Right lobe of liver (tissue), 6 donors: ENCODE measurements at regions of chr10 and their contacts with region 1.

Region 1: DNA sequence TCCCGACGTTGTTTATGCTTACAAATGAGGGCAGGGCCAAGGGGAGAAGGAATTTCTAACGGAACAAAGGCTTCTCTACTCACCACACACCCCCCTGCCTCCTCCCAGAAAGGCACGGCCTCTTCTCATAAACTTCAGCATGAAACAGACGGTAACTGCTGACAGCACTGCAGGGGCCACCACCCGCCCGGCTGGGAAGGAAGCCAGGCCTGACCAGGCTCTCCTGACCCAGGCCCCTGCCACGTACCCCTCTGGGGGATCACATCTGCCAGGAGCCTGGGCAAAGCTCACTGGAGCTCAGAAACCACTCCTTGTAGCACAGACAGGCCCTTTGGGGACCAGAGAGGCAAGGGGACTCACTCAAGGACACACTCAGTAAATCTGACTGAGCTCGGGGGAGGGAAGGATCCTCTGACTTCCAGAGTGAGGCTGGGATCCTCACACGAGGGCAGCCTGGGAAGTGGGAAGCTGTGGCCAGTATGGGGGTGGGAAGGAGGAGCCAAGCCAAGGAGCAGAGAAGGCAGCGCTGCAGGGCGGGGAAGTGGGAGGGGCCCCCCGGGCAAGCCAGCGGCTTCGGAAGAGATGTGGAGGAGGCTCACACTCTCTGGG is 46.1 kb downstream of the ZCCHC24 start:
- DNase-seq: peak; percentile 76 to 82 (median 79)
- ATAC-seq: peak; percentile 54 to 70 (median 61)
- H3K4me3 ChIP-seq: no peak overlapping the region
- H3K27ac ChIP-seq: peak overlapping the region; percentile 58 to 74 (median 60)
- H3K4me1 ChIP-seq: peaks cover 2 to 81% (median 27%) of the 10 kb centered on the region in 4 donors
- H3K27me3 ChIP-seq: no peaks in the 10 kb centered on the region
- CTCF ChIP-seq: no peak
- POLR2A ChIP-seq: no peak

Region 2: DNA sequence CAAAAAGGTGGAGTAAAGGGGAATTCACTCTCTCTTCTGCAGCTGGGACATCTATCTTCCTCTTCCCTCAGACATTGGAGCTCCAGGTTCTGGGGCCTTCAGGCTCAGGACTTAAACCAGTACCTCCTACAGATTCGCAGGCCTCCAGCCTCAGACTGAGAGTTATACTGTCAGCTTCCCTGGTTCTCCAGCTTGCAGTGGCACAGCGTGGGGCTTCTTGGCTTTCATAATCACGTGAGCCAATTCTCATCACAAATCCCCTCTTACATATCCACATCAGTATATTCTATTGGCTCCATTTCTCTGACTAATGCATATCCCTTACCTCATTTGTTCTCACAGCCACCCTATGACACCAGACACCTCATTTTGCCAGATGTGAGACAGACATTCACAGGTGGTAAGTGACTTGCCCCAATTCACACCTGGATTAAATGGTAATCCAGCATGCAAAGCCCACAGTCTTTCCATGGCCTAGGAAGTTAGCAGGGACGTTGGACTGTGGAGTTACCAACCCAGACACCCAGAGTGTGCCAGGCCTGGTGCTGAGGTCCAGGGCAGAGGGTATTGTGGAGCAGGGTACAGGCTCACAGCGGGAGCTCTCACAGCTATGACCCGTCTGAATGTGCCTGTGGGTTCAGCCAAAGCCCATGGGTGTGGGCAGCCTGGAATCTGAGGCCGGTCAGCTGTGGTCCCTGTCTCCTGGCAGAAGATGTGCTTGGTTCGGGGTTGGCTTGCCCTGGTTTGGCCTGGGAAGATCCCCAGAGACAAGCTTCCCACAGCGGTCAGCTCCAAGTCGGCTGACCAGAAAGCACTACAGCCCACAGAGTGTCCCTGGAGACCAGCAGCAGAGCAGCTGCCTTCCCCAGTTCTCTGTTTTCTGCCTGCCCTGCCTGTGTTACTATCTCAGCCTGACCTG is 64.5 kb after region 1 on chr10:
- intact Hi-C with region 1: loop called in 1 of 2 experiments (anchors 10 kb)
- DNase-seq: no peak
- ATAC-seq: no peak
- H3K4me3 ChIP-seq: no peak overlapping the region
- H3K27ac ChIP-seq: no peak overlapping the region
- H3K4me1 ChIP-seq: peaks cover 0 to 8% (median 0%) of the 10 kb centered on the region in 4 donors
- H3K27me3 ChIP-seq: no peaks in the 10 kb centered on the region
- CTCF ChIP-seq: no peak
- POLR2A ChIP-seq: no peak